ENCODE measurements at regions of chr1 and their contacts with region 1.

Region 1: GRCh38 chr1:84143796-84144565 is at the start of gene PRKACB:
- DNase-seq: no peak
- ATAC-seq: no peak
- H3K4me3 ChIP-seq: no peak within 1 kb of the TSS
- H3K27ac ChIP-seq: no peak within 1 kb of the TSS
- H3K4me1 ChIP-seq: no peaks in the 10 kb centered on the region
- H3K27me3 ChIP-seq: no peaks in the 10 kb centered on the region
- CTCF ChIP-seq: no peak
- EP300 ChIP-seq: no peak
- POLR2A ChIP-seq: no peak
- RAD21 ChIP-seq: no peak
- total RNA-seq, gene PRKACB: 5.8 and 7.7 TPM in 2 replicates

Region 2: GRCh38 chr1:84433258-84434080 is 289.5 kb after region 1 on chr1:
- CTCF ChIA-PET with region 1: no interaction called
- POLR2A ChIA-PET with region 1: no interaction called
- in situ Hi-C with region 1: no loop called
- intact Hi-C with region 1: loop called (anchors 2 kb)
- DNase-seq: peak; percentile 30
- ATAC-seq: peak; percentile 61
- H3K4me3 ChIP-seq: no peak overlapping the region
- H3K27ac ChIP-seq: no peak overlapping the region
- H3K4me1 ChIP-seq: no peaks in the 10 kb centered on the region
- H3K27me3 ChIP-seq: no peaks in the 10 kb centered on the region
- CTCF ChIP-seq: peak; percentile 59
- EP300 ChIP-seq: no peak
- POLR2A ChIP-seq: no peak
- RAD21 ChIP-seq: no peak

Region 3: DNA sequence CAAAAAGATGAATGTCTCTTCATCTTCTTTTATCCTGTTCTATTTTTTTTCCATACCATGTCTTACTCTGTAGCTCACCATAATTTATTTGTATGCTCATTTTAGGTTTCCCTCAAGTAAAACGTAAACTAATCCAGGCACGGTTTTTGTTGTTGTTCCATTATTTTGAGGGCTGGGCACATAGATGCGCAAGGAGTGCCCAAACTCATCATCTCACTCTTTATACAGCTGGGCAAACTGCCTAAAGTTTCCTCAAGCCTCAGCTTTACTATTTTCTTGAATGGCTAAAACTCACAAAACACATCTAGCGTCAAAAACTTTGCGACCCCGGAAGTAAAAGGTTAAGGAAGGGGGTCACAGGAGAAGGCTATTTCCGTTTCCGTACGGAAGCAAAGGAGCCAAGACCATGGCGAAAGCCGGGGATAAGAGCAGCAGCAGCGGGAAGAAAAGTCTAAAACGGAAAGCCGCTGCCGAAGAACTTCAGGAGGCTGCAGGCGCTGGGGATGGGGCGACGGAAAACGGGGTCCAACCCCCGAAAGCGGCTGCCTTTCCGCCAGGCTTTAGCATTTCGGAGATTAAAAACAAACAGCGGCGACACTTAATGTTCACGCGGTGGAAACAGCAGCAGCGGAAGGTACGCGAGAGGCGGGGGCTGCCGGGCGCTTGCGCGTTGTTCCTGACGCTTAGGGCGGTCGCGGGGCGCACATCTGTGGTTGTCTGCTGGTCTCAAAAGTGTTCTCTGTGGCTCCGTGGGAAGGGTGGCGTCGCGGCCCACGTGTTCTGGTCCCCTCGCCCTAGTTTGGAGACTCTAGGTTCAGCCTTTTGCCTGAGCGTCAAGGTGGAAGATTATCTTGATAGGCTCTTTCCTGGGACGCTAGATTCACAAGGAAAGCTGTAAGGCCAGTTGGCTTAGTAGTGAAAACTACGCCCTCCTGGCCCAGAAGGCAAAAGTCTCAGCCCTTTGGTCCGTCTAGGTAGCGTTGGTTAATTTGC is 335.2 kb after region 1 on chr1 and contains the start of gene RPF1:
- CTCF ChIA-PET with region 1: no interaction called
- POLR2A ChIA-PET with region 1: no interaction called
- in situ Hi-C with region 1: no loop called
- intact Hi-C with region 1: no loop called
- DNase-seq: peak; percentile 82
- ATAC-seq: peak; percentile 99
- H3K4me3 ChIP-seq: peak within 1 kb of the TSS; percentile 82 to 94 (median 93)
- H3K27ac ChIP-seq: peak within 1 kb of the TSS; percentile 86
- H3K4me1 ChIP-seq: peaks cover 20% of the 10 kb centered on the region
- H3K27me3 ChIP-seq: no peaks in the 10 kb centered on the region; a peak in 1 of 5 replicates
- CTCF ChIP-seq: no peak
- EP300 ChIP-seq: peak in 1 of 2 experiments; percentile 8; a peak in 1 of 4 replicates
- POLR2A ChIP-seq: peak; percentile 58 to 84
- RAD21 ChIP-seq: peak; percentile 42; the same call in 1 of the 2 replicates
- total RNA-seq, gene RPF1: 39.0 and 58.4 TPM in 2 replicates

Region 4: GRCh38 chr1:84620720-84621313 is 476.8 kb after region 1 on chr1:
- CTCF ChIA-PET with region 1: no interaction called
- POLR2A ChIA-PET with region 1: no interaction called
- in situ Hi-C with region 1: loop called (anchors 25 kb)
- intact Hi-C with region 1: no loop called
- DNase-seq: peak; percentile 41
- ATAC-seq: peak; percentile 95
- H3K4me3 ChIP-seq: peak overlapping the region; percentile 54 to 83 (median 60)
- H3K27ac ChIP-seq: no peak overlapping the region
- H3K4me1 ChIP-seq: peaks cover 19% of the 10 kb centered on the region
- H3K27me3 ChIP-seq: peaks cover 2 to 3% of the 10 kb centered on the region in 2 experiments; a peak in 2 of 5 replicates
- CTCF ChIP-seq: peak; percentile 89
- EP300 ChIP-seq: no peak
- POLR2A ChIP-seq: no peak
- RAD21 ChIP-seq: peak; percentile 77

Measured in HepG2 (cell line).